Activated T-helper 1 cell treated with anti-CD3 and anti-CD28 coated beads, Interleukin-12 subunit alpha, Interleukin-12 subunit beta, Interleukin-2, Interleukin-4 antibody, amounts not matched to agents 30 ng/mL and 10 ng/mL and 1 ng/mL, durations not matched to agents 14 hours and 24 hours and 36 hours (primary cell): ENCODE measurements at regions of chr2 and their contacts with region 1.

Region 1: DNA sequence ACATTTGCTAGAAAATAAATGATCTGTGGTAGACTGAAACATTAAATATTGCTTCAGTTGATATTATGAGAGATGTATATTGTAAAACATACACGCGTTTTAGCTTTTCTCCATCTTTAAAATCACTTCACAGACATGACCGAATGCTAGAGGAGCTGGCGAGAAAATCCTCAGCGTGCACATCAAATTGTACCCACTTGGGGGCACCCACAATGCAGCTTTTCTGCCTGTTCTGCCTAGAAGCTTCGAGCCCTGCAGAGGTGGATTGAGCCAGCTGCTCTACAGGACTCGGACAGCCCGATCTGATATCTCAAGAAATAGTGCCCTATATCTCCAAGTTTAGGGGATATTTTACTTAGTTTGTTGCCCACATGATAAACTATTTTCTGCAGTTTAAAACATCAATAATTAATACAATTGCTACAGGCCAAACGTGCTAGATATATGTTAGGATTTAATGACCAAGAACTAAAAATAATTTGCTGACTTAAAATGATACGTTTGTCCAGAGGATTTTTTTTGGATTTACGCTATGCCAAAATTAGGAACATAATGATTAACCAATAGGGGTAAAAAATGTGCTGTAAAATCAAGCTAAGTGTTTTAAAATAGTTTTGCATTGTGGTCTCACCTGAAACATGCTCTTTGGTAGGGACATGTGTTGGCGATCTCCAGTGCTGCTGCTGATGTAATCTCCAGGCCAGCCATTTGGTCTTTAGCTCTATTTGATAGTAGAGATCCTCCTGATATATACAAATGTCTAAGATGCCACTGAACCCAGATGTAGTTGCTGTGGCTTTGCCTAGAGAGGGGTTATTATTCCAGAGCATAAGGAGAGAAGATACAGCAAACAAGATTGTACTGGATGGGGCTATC is 22.3 kb upstream of the ATP5MC3 start:
- DNase-seq: peak; percentile 23
- H3K4me3 Mint-ChIP-seq: no peak overlapping the region
- H3K27ac Mint-ChIP-seq: no peak overlapping the region
- H3K4me1 Mint-ChIP-seq: peaks cover 11% of the 10 kb centered on the region
- H3K27me3 Mint-ChIP-seq: peaks cover 20% of the 10 kb centered on the region

Region 2: DNA sequence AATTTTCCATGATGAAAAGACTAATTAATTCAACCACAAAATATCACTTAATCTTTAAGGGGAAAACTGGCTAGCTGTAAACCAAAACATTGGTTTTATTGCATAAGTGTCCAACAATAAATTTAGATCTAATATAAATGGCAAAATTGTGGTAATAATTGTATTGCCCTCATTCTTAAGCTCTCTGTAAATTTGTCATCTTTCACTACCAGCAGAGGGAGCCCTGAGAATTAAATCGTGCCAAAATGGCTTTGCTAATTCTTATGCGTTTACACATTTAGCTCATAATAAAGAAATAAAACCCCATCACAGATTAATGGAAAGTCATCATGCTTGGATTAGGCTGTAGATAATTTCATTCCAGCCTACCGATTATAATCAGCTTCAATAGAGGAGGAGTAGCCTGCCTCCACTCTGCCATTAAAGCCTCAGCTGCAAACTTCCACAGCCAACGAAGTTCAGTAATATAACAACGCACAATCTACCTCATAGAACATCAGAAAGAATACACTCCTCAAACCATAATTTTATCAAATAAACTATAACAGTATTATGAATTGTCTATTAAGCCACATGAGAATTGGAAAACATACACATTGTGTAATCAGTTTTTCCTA is 47.7 kb after region 1 on chr2:
- intact Hi-C with region 1: loop called (anchors 5 kb)
- DNase-seq: no peak
- H3K4me3 Mint-ChIP-seq: no peak overlapping the region
- H3K27ac Mint-ChIP-seq: no peak overlapping the region
- H3K4me1 Mint-ChIP-seq: peaks cover 5% of the 10 kb centered on the region
- H3K27me3 Mint-ChIP-seq: peaks cover 23% of the 10 kb centered on the region

Region 3: DNA sequence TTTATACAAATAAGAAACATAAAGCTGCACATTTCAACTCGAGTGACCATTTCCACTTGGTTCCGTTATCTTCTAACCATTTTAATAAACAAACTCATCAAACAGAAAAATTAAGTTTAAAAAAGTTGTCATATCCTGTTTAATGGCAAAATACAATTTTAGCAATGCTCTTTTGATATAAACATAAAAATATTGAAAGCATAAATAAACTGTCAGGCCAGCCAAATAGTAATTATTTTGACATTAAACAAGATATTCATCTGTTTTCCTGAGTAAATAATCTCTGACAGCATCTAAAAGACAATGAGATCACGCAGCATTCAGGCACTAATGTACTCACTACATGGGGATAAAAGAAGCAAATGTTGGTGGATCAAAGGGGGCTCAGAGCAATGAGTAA is 122.9 kb after region 1 on chr2:
- intact Hi-C with region 1: loop called (anchors 1 kb)
- DNase-seq: no peak
- H3K4me3 Mint-ChIP-seq: no peak overlapping the region
- H3K27ac Mint-ChIP-seq: no peak overlapping the region
- H3K4me1 Mint-ChIP-seq: no peaks in the 10 kb centered on the region
- H3K27me3 Mint-ChIP-seq: peaks cover 3% of the 10 kb centered on the region